ENCODE measurements at regions of chr13 and their contacts with region 1.

Region 1: GRCh38 chr13:44271031-44271433 is 102.6 kb upstream of the SERP2 start:
- DNase-seq: peak; percentile 85
- ATAC-seq: peak; percentile 64
- H3K4me3 ChIP-seq: no peak overlapping the region
- H3K27ac ChIP-seq: peak overlapping the region; percentile 40; the same call in 1 of the 2 replicates
- H3K4me1 ChIP-seq: peaks cover 34% of the 10 kb centered on the region
- H3K27me3 ChIP-seq: no peaks in the 10 kb centered on the region
- CTCF ChIP-seq: no peak
- POLR2A ChIP-seq: no peak
- RAD21 ChIP-seq: 0 out of 2 replicates have a peak, but pooled peaks have one; percentile 5

Region 2: DNA sequence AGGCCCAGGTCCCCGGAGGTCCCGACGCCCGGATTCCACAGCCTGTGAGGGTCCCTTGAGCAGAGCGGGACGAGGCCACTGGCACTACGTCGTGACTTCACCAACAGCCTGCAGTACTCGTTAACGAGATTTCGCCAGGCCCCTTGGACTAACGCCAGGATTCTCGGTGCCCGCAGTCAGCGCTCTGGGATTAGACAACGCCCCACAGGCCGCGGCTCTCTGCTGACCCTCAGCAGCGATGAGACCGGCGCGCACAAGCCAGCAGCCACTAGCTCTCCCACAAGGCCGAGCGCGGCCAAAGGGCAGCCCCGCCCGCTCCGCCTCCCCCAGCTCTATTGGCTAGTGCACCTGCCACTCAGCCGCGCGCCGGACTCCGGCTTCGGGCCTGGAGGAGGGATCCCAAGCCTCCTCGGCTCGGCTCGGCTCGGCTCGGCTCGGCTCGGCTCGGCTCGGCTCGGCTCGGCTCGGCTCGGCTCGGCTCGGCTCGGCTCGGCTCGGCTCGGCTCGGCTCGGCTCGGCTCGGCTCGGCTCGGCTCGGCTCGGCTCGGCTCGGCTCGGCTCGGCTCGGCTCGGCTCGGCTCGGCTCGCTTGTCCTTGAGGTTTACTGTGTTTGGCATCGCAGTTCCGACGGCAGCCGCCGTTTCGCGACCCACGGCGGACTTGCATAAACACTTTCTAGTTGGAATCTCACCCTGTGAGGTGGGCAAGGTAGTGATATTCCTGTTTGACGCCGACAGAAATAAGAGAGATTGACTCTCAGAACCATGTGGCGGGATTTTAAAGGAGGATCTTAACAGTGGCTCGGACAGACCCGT is 129.1 kb before region 1 on chr13:
- CTCF ChIA-PET with region 1: no interaction called
- POLR2A ChIA-PET with region 1: interaction called, 28 read pairs
- dilution Hi-C with region 1: no loop called
- in situ Hi-C with region 1: no loop called
- intact Hi-C with region 1: no loop called
- DNase-seq: peak; percentile 90
- ATAC-seq: peak; percentile 100
- H3K4me3 ChIP-seq: peak overlapping the region; percentile 67
- H3K27ac ChIP-seq: peak overlapping the region; percentile 92
- H3K4me1 ChIP-seq: peaks cover 7% of the 10 kb centered on the region
- H3K27me3 ChIP-seq: peaks cover 2% of the 10 kb centered on the region; the same call in 1 of the 2 replicates
- CTCF ChIP-seq: 0 out of 2 replicates have a peak, but pooled peaks have one; percentile 3
- POLR2A ChIP-seq: peak; percentile 76
- RAD21 ChIP-seq: peak; percentile 15; the same call in 1 of the 2 replicates

Measured in IMR-90 (cell line).